Activated CD4-positive, alpha-beta memory T cell treated with anti-CD3 and anti-CD28 coated beads for 36 hours (primary cell): ENCODE measurements at regions of chr12 and their contacts with region 1.

Region 1: GRCh38 chr12:57782608-57783465 is at the start of gene TSFM:
- DNase-seq: peak; percentile 98
- H3K4me3 Mint-ChIP-seq: peak within 1 kb of the TSS; percentile 100
- H3K27ac Mint-ChIP-seq: peak within 1 kb of the TSS; percentile 93
- H3K4me1 Mint-ChIP-seq: peaks cover 37% of the 10 kb centered on the region
- H3K27me3 Mint-ChIP-seq: no peaks in the 10 kb centered on the region
- total RNA-seq, gene TSFM: 45.5 to 47.2 TPM

Region 2: GRCh38 chr12:57621497-57622292 is 161.1 kb before region 1 on chr12:
- CTCF ChIA-PET with region 1: no interaction called
- POLR2A ChIA-PET with region 1: no interaction called
- intact Hi-C with region 1: no loop called
- DNase-seq: peak; percentile 68
- H3K4me3 Mint-ChIP-seq: peak overlapping the region; percentile 63
- H3K27ac Mint-ChIP-seq: no peak overlapping the region
- H3K4me1 Mint-ChIP-seq: peaks cover 24% of the 10 kb centered on the region
- H3K27me3 Mint-ChIP-seq: peaks cover 88% of the 10 kb centered on the region

Region 3: GRCh38 chr12:57765042-57765697 is 17.7 kb before region 1 on chr12:
- CTCF ChIA-PET with region 1: interaction called, 13 read pairs
- POLR2A ChIA-PET with region 1: interaction called, 3 read pairs
- intact Hi-C with region 1: no loop called
- DNase-seq: peak; percentile 79
- H3K4me3 Mint-ChIP-seq: peak overlapping the region; percentile 86
- H3K27ac Mint-ChIP-seq: peak overlapping the region; percentile 77
- H3K4me1 Mint-ChIP-seq: peaks cover 28% of the 10 kb centered on the region
- H3K27me3 Mint-ChIP-seq: peaks cover 2% of the 10 kb centered on the region

Region 4: DNA sequence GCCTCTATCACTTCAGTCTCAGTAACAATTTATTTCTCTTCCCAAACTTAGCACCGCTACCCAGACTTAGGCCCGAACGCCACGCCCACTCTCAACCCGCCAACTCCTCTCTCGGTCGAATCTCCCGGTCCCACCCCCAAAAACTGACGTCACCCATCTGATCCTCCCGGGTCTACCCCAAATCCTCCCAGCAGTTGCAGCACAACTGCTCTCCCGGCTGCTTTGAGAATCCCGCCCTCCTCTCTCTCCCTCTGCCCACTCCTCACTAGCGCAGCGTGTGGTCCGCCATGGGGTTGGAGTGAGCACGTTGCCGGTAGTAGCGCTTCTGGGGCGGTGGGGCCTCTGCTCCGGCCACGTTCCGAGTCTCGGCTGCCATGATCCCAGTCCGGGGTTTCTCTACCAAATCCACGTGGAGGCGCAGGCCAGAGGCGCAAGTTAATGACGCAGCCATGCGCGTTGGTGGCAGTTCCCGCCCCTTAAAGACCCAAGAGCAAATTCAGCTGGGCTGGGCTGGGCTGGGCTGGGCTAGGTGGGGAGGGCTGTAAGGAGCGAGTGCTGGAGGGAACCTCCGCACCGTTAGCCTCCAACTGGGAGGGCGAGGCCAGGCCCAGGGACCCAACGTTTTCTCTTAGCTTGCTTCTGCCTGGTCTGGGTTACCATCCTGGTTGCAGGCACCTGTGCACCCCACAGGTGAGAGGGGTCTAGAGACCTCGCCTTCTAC is 11.0 kb before region 1 on chr12 and contains the start of gene METTL1:
- CTCF ChIA-PET with region 1: interaction called, 25 read pairs
- POLR2A ChIA-PET with region 1: interaction called, 10 read pairs
- intact Hi-C with region 1: loop called (anchors 1 kb)
- DNase-seq: peak; percentile 97
- H3K4me3 Mint-ChIP-seq: peak within 1 kb of the TSS; percentile 99
- H3K27ac Mint-ChIP-seq: peak within 1 kb of the TSS; percentile 97
- H3K4me1 Mint-ChIP-seq: peaks cover 24% of the 10 kb centered on the region
- H3K27me3 Mint-ChIP-seq: no peaks in the 10 kb centered on the region
- total RNA-seq, gene METTL1: 30.0 to 32.0 TPM

Region 5: GRCh38 chr12:57793920-57794319 is 11.1 kb after region 1 on chr12:
- CTCF ChIA-PET with region 1: interaction called, 16 read pairs
- POLR2A ChIA-PET with region 1: no interaction called
- intact Hi-C with region 1: no loop called
- DNase-seq: no peak
- H3K4me3 Mint-ChIP-seq: no peak overlapping the region
- H3K27ac Mint-ChIP-seq: peak overlapping the region; percentile 69
- H3K4me1 Mint-ChIP-seq: peaks cover 16% of the 10 kb centered on the region
- H3K27me3 Mint-ChIP-seq: no peaks in the 10 kb centered on the region

Region 6: DNA sequence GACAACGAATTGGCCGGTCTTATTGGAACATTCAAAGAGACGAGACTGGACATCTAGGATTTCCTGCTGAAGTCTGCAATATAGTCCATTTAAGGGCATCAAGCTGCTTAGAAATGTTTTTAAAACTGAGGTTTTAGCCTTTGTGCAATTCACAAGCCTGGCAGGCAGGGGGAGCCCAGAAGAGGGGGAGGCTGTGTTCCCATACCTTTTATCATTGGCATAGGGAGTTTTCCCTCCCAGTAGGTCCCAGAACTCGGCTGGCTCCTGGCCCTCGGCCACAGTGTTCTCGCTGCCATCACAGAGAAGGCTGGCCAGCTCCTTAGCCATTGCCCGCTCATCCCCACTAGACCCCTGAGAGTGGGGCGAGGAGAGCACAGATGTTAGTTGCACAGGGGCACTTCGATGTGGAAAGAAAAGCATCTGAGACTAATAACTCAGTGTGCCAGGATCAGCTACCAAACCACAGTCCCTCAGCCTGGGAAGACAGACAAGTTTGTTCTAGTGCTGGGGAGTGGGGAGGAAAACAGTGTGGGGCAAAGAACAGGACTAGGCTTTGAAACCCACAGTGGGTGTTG is 20.6 kb after region 1 on chr12:
- CTCF ChIA-PET with region 1: interaction called, 11 read pairs
- POLR2A ChIA-PET with region 1: interaction called, 3 read pairs
- intact Hi-C with region 1: no loop called
- DNase-seq: peak; percentile 43
- H3K4me3 Mint-ChIP-seq: no peak overlapping the region
- H3K27ac Mint-ChIP-seq: no peak overlapping the region
- H3K4me1 Mint-ChIP-seq: no peaks in the 10 kb centered on the region
- H3K27me3 Mint-ChIP-seq: no peaks in the 10 kb centered on the region

Region 7: DNA sequence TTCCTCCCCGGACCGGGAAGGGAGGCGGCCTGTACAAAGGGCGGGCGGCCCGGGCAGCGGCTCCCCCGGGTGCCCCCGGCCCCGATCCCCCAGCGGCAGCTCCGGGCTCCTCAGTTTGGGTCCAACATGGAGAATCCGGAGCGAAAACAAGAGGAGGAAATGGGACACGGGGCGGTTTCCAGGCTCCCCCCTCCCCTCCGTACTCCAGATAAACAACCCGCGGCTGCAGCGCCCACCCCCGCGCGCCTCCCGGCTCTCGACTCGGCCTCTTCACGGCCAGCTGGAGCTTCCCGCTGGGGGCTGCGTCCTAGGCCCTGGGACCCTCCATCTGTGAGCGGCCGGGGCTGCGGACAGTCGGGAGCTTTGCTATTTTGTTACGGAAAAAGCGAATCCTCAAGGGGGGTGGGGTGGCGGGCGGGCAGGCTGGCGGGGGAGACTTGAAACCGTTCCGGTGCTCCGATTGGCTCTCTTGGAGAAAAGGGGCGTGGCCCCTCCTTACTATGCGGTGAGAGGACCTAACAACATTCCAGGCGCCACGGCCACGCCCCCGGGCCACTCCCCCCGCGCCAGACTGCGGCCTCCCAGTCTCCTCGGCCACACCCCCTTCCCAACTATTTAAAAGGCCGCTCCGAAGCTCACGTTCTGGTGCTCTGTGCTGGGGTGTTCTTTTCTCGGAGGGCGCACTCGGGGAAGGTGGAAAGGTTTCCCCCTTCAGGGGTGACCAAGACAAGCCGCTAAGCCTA is 63.9 kb after region 1 on chr12 and contains the start of gene CTDSP2:
- CTCF ChIA-PET with region 1: interaction called, 3 read pairs
- POLR2A ChIA-PET with region 1: interaction called, 5 read pairs
- intact Hi-C with region 1: loop called (anchors 2 kb)
- DNase-seq: peak; percentile 94
- H3K4me3 Mint-ChIP-seq: peak within 1 kb of the TSS; percentile 82
- H3K27ac Mint-ChIP-seq: peak within 1 kb of the TSS; percentile 78
- H3K4me1 Mint-ChIP-seq: peaks cover 37% of the 10 kb centered on the region
- H3K27me3 Mint-ChIP-seq: peaks cover 7% of the 10 kb centered on the region
- total RNA-seq, gene CTDSP2: 100 to 101 TPM

Region 8: DNA sequence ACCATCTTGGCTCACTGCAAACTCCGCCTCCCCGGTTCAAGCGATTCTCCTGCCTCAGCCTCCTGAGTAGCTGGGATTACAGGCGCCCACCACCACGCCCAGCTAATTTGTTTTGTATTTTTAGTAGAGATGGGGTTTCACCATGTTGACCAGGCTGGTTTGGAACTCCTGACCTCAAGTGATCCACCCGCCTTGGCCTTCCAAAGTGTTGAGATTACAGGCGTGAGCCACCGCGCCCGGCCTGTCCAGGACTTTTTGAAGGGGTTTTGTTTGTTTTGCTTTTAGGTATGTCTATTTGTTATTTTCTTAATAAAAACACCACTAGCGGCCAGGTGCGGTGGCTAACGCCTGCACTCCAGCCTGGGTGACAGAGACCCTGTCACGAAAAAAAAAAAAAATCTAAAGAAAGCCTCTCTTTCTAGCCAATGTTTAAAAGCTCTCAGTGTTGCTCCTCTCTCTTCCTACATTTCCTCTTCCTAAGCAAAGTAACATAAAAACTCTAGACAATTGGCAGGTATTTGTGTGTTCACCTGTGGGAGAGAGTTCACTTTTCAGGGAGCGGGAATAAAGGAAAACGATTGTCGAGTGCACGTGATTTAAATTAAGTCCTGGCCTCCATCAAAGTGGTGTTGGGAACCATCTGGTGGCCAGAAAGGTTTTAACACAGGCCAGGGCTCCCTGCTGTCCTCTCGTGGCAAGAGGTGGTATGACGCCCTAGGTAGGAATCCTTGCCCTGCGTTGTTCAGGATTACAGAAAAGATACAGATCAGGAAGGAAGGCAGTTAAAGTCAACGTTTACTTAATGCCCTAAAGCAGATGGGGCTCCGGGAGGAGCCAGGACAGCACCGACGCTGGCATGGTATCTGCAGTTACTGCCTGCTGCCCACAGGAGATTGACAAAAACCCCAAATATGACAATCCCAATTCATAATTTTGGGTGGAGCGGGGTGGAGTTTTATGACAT is 122.3 kb after region 1 on chr12:
- CTCF ChIA-PET with region 1: interaction called, 13 read pairs
- POLR2A ChIA-PET with region 1: no interaction called
- intact Hi-C with region 1: loop called (anchors 1 kb)
- DNase-seq: peak; percentile 91
- H3K4me3 Mint-ChIP-seq: peak overlapping the region; percentile 52
- H3K27ac Mint-ChIP-seq: peak overlapping the region; percentile 10
- H3K4me1 Mint-ChIP-seq: peaks cover 7% of the 10 kb centered on the region
- H3K27me3 Mint-ChIP-seq: peaks cover 14% of the 10 kb centered on the region